CD8-positive, alpha-beta memory T cell (primary cell): ENCODE measurements at regions of chr17 and their contacts with region 1.

Region 1: DNA sequence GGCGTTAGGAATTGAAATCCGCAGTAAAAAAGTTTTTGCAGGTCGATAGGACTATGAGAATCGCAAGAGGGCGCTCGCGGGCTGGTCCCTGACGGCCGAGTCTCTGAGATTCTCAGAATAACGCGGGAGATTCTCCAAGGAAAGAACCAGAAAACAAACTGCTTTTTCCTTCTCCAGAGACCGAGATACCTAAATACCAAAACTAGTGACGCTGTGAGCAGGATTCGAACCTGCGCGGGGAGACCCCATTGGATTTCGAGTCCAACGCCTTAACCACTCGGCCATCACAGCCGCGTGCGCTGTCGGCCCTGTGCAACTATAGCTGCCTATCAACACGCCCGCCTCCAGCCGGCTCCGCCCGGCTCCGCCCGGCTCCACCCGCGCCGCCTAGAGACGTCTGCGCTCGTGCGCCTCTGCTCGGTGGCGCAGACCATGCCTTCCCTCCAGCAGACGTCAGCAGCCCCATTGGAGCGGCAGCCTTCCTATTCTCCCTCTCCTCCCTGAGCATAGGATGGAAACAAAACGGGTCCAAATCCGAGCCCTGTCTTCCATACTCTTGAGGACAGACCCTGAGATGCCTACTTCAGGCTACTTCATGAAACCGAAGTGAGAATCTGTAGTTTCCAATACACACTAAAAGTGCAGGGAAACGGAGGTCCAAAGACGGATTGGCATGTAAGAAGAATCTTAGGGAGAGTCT is 13.4 kb downstream of the PER1 start:
- DNase-seq: peak; percentile 92 to 97 (median 95)
- H3K4me3 ChIP-seq: peak overlapping the region; percentile 97
- H3K4me3 Mint-ChIP-seq: no peak overlapping the region
- H3K27ac ChIP-seq: peak overlapping the region; percentile 94
- H3K27ac Mint-ChIP-seq: no peak overlapping the region
- H3K4me1 ChIP-seq: peaks cover 22% of the 10 kb centered on the region
- H3K4me1 Mint-ChIP-seq: peaks cover 0 to 2% (median 0%) of the 10 kb centered on the region in 3 donors
- H3K27me3 ChIP-seq: no peaks in the 10 kb centered on the region
- H3K27me3 Mint-ChIP-seq: peaks cover 0 to 5% of the 10 kb centered on the region in 2 donors

Region 2: DNA sequence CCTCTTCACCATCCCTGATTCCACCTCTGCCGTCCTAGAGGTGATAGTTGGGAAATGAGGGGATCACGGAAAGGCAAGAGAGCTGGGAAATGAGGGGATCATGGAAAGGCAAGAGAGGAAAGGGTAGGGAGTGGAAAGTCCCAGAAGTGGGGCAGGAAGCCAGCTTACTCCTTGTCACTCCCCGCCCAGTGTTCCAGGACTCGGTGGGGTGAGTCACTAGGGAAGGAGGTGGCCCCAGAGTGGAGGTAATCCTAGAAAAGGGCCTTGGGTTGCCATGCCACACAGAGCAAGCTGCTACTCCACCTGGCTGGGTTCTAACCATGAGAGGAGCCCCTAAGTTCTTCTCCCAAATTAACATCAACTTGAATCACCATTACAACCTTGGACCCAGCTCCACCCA is 35.3 kb before region 1 on chr17:
- CTCF ChIA-PET with region 1: no interaction called
- POLR2A ChIA-PET with region 1: no interaction called
- DNase-seq: no peak
- H3K4me3 ChIP-seq: no peak overlapping the region
- H3K4me3 Mint-ChIP-seq: no peak overlapping the region
- H3K27ac ChIP-seq: no peak overlapping the region
- H3K27ac Mint-ChIP-seq: no peak overlapping the region
- H3K4me1 ChIP-seq: no peaks in the 10 kb centered on the region
- H3K4me1 Mint-ChIP-seq: no peaks in the 10 kb centered on the region
- H3K27me3 ChIP-seq: no peaks in the 10 kb centered on the region
- H3K27me3 Mint-ChIP-seq: peaks cover 0 to 8% of the 10 kb centered on the region in 2 donors

Region 3: DNA sequence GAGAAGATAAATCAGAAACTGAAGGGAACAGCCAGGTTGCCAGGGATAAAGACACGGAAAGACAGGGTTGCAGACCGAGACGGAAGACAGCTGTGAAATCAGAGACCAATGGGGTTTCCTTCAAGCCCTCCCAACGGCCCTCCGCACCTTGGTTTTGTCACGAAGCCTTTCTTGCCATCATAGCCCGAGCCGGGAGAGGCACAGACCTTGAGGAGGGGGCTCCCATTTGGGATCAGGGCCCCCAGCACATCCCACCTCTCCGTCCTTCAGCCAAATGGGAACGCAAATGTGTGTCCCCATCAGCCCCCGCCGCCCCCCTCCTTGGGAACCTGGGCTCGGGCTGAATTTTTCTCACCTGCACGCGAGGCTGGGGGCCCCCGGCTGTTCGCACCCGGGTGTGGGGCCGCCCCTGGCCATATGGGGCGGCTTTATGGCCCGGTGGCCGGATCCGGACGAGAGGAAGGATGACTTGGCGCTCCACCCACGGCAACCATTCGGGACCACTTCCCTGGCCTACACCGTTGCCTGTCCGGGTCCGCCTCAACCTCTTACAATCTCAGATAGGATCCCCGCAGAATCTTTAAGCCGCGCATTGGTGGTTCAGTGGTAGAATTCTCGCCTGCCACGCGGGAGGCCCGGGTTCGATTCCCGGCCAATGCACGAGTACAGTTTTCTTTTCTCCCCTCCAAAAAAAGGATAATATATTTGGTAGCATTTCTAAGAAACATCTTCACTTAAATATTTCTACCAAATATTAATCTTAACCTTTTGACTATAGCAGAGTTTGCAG is 13.5 kb before region 1 on chr17:
- CTCF ChIA-PET with region 1: interaction called, 52 read pairs
- POLR2A ChIA-PET with region 1: interaction called, 14 read pairs
- DNase-seq: peak; percentile 76 to 89 (median 82)
- H3K4me3 ChIP-seq: peak overlapping the region; percentile 91
- H3K4me3 Mint-ChIP-seq: peak overlapping the region; percentile 84 to 94 (median 90)
- H3K27ac ChIP-seq: peak overlapping the region; percentile 24
- H3K27ac Mint-ChIP-seq: peak overlapping the region; percentile 16 to 93 (median 70)
- H3K4me1 ChIP-seq: peaks cover 49% of the 10 kb centered on the region
- H3K4me1 Mint-ChIP-seq: peaks cover 51 to 63% (median 59%) of the 10 kb centered on the region in 3 donors
- H3K27me3 ChIP-seq: peaks cover 7% of the 10 kb centered on the region
- H3K27me3 Mint-ChIP-seq: peaks cover 23 to 39% of the 10 kb centered on the region in 2 donors

Region 4: GRCh38 chr17:8151123-8151640 is 12.4 kb after region 1 on chr17:
- CTCF ChIA-PET with region 1: interaction called, 108 read pairs
- POLR2A ChIA-PET with region 1: interaction called, 31 read pairs
- DNase-seq: peak; percentile 87 to 97 (median 95)
- H3K4me3 ChIP-seq: peak overlapping the region; percentile 60
- H3K4me3 Mint-ChIP-seq: peak overlapping the region in 4 of 7 donors; percentile 57 to 98 (median 95)
- H3K27ac ChIP-seq: peak overlapping the region; percentile 100
- H3K27ac Mint-ChIP-seq: peak overlapping the region in 3 of 8 donors; percentile 87 to 99 (median 91)
- H3K4me1 ChIP-seq: peaks cover 55% of the 10 kb centered on the region
- H3K4me1 Mint-ChIP-seq: peaks cover 19 to 68% (median 33%) of the 10 kb centered on the region in 3 donors
- H3K27me3 ChIP-seq: no peaks in the 10 kb centered on the region
- H3K27me3 Mint-ChIP-seq: peaks cover 0 to 20% of the 10 kb centered on the region in 2 donors

Region 5: DNA sequence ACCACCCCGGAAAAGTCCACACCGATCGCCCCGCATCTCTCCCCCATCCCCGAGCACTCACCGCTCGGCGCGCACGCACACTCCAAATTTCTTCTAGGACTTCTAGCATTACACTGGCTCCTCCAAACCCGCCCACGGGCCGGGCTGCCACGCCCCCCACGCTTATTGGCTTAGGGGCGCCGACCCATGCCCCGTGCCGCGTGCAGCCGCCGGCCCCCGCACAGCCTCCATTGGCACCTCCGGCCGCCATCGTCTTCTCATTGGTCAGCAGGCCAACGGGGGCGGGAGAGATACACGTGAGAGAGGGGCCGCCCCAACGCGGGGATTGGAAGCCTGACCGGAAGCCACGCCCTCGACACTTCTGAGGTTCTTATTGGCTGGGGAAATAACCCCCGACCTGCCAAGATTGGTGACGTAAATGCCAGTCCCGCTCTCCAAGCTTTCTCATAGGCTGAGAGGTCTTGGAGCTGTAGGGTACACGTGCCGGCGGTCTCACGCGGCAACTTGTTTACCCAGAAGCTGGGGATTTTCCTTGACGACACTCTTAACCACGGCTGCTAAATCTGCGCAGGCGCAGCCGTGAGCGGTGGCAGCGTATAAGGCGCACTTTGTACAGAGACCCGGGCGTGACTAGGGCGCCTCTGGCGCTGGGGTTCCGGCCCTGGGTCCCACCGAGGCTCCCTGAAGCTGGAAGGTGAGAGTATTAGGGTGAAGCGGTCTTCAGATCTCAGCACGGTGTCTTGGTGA is 17.6 kb after region 1 on chr17:
- CTCF ChIA-PET with region 1: interaction called, 108 read pairs
- POLR2A ChIA-PET with region 1: interaction called, 31 read pairs
- DNase-seq: peak; percentile 100
- H3K4me3 ChIP-seq: peak overlapping the region; percentile 100
- H3K4me3 Mint-ChIP-seq: no peak overlapping the region
- H3K27ac ChIP-seq: peak overlapping the region; percentile 100
- H3K27ac Mint-ChIP-seq: no peak overlapping the region
- H3K4me1 ChIP-seq: peaks cover 77% of the 10 kb centered on the region
- H3K4me1 Mint-ChIP-seq: peaks cover 32 to 73% (median 48%) of the 10 kb centered on the region in 3 donors
- H3K27me3 ChIP-seq: no peaks in the 10 kb centered on the region
- H3K27me3 Mint-ChIP-seq: peaks cover 0 to 14% of the 10 kb centered on the region in 2 donors

Region 6: DNA sequence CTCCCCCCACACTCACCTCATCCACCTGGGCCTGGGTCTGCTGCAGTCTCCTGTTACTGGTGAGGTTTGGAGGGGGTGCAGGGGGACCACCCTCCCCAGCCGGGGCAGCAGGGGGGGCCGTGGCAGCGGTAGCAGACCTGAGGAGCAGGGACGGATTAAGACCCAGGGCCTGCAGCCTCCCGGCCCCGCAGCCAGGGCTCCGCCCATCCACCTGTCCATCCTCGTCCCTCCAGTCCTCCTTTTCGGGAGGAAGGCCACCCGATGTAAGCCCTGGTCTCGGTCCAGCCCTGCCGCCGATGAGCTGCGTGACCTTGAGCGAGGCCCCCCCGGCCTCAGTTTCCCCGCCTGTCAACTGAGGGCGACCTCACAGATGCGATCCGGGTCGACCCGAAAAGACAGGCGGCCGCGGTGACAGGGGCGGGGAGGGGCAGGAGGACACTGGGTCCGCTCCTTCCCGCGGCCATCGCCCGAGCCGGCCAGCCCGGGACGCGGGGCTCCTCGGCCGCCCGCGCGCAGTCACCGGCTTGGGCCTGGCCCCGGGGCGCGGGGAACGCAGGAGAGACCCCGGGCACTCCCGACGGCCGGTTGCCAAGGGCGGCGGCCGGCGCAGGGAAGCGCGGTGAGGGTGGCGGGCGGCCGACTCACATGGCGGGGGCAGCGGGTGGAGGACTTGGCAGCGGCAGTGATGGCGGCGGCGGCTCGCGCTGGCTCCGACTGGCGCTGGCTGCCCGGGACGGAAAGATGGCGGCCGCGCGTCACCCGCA is 23.6 kb after region 1 on chr17 and contains the start of gene VAMP2:
- CTCF ChIA-PET with region 1: interaction called, 108 read pairs
- POLR2A ChIA-PET with region 1: interaction called, 5 read pairs
- DNase-seq: peak; percentile 81 to 90 (median 86)
- H3K4me3 ChIP-seq: peak within 1 kb of the TSS; percentile 96
- H3K4me3 Mint-ChIP-seq: peak within 1 kb of the TSS; percentile 87 to 95 (median 93)
- H3K27ac ChIP-seq: peak within 1 kb of the TSS; percentile 98
- H3K27ac Mint-ChIP-seq: peak within 1 kb of the TSS; percentile 94 to 100 (median 98)
- H3K4me1 ChIP-seq: peaks cover 60% of the 10 kb centered on the region
- H3K4me1 Mint-ChIP-seq: peaks cover 54 to 66% (median 58%) of the 10 kb centered on the region in 3 donors
- H3K27me3 ChIP-seq: no peaks in the 10 kb centered on the region
- H3K27me3 Mint-ChIP-seq: peaks cover 0 to 3% of the 10 kb centered on the region in 2 donors
- total RNA-seq, gene VAMP2: 38.3 to 41.0 TPM

Region 7: GRCh38 chr17:8294814-8295316 is 156.0 kb after region 1 on chr17:
- CTCF ChIA-PET with region 1: interaction called, 19 read pairs
- POLR2A ChIA-PET with region 1: interaction called, 6 read pairs
- DNase-seq: no peak
- H3K4me3 ChIP-seq: peak overlapping the region; percentile 87
- H3K4me3 Mint-ChIP-seq: peak overlapping the region; percentile 89 to 96 (median 92)
- H3K27ac ChIP-seq: peak overlapping the region; percentile 81
- H3K27ac Mint-ChIP-seq: peak overlapping the region; percentile 86 to 99 (median 95)
- H3K4me1 ChIP-seq: peaks cover 17% of the 10 kb centered on the region
- H3K4me1 Mint-ChIP-seq: peaks cover 31 to 44% (median 31%) of the 10 kb centered on the region in 3 donors
- H3K27me3 ChIP-seq: no peaks in the 10 kb centered on the region
- H3K27me3 Mint-ChIP-seq: peaks cover 0 to 5% of the 10 kb centered on the region in 2 donors

Region 8: DNA sequence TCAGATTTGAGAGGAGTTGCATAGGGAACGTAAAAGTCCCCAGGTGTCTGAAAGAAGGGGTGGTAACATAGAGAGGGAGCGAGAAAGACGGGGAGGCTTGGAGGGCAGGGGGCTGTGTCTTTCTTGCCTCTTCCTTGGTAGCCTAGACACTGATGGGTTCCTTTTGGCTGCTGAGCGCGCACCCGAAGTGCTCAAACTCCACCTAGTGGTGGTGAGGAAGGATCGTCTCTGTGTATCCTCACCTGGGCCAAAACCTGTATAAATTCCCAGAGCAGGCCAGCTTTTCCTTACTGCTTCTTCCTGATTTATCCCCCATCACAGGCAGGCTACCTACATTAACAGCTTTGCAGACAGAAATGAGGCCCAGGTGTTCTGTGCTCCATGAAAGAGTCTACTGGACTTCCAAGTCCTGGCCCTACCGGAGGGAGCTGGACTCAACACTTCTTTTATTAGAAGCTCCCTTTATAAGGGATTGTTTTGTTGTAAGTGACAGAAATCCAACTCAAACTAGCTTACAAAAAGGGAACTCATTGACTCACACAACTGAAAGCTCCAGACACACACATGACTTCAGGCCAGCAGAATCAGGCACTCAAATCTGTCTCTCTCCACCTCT is 161.9 kb after region 1 on chr17:
- CTCF ChIA-PET with region 1: interaction called, 19 read pairs
- POLR2A ChIA-PET with region 1: interaction called, 6 read pairs
- DNase-seq: peak; percentile 43 to 79 (median 66)
- H3K4me3 ChIP-seq: no peak overlapping the region
- H3K4me3 Mint-ChIP-seq: peak overlapping the region in 1 of 7 donors; percentile 31
- H3K27ac ChIP-seq: no peak overlapping the region
- H3K27ac Mint-ChIP-seq: peak overlapping the region in 6 of 8 donors; percentile 4 to 86 (median 24)
- H3K4me1 ChIP-seq: peaks cover 10% of the 10 kb centered on the region
- H3K4me1 Mint-ChIP-seq: peaks cover 9 to 12% (median 11%) of the 10 kb centered on the region in 3 donors
- H3K27me3 ChIP-seq: no peaks in the 10 kb centered on the region
- H3K27me3 Mint-ChIP-seq: no peaks in the 10 kb centered on the region